Cardiac septum (tissue), 1 donor: ENCODE measurements at regions of chr11 and their contacts with region 1.

Region 1: DNA sequence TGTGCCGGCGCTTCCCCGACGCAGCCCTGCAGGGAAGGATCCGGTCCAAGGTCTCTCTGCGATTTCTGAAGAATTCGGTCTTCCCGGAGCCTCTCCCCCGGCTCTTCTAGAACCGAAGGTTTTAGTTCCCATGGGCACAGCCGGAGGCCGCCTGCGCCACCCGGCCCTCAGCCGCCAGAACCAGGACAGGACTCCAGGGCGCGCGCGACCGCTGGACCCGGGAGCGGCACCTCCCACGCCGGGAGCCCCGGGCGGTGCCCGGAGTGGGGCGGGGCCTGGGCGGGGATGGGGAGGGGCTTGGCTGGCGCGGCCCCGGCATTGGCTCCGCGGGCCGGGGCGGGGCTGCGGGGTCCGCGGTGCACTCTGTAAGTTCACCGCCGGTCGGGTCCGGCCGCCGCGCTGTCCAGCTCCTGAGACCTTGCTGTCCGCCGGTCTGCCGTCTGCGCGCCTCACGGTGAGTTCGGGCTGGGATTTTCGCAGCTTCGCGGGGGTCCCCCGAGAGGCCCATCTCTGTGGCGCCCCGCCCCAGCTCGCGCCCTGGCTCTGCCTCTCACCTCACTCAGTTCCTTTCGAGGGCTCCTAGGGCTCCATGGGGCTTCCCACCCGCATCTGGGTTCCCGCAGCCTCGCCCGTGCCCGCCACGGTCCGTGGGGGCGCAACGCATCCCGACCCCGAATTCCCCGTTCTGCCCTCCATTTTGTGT is at the start of gene CDC42EP2:
- DNase-seq: peak; percentile 95
- total RNA-seq, gene CDC42EP2: 3.6 TPM

Region 2: GRCh38 chr11:65274735-65275682 is 39.6 kb before region 1 on chr11:
- intact Hi-C with region 1: loop called (anchors 1 kb)
- DNase-seq: peak; percentile 76

Region 3: DNA sequence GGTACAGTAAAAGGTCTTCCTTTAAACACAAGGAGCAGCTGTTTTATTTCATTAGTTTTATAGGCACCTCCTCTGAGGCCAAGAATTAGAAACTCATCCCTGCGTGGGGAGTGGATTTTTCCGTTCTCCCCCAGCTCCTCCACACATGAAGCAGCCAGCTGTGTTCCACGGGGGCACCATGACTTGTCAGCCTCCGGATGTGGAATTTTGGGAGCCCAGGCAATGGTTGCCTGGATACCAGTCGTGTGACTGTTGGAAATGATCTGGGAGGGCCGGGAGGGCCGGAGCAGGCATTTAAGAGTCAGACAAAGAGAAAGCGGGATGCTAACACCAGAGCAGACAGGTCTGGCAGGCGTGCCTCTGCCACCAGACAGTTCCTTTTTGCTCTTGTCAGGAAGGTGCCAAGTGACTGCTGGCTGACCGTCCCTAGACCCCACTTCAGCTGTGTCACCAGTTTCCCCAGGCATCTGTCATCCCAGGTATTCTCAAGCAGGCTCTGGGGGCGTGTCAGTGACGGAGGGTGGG is 15.9 kb before region 1 on chr11:
- intact Hi-C with region 1: loop called (anchors 2 kb)
- DNase-seq: no peak